Activated CD4-positive, alpha-beta memory T cell treated with anti-CD3 and anti-CD28 coated beads, Interleukin-2, amount 10 ng/mL, durations not matched to agents 7 days and 5 days (primary cell): ENCODE measurements at regions of chr11 and their contacts with region 1.

Region 1: GRCh38 chr11:65040847-65041621 is at the start of gene SAC3D1:
- DNase-seq: peak; percentile 95
- H3K4me3 Mint-ChIP-seq: peak within 1 kb of the TSS; percentile 91
- H3K27ac Mint-ChIP-seq: peak within 1 kb of the TSS; percentile 97
- H3K4me1 Mint-ChIP-seq: peaks cover 41% of the 10 kb centered on the region
- H3K27me3 Mint-ChIP-seq: no peaks in the 10 kb centered on the region
- total RNA-seq, gene SAC3D1: 24.2 to 24.8 TPM

Region 2: DNA sequence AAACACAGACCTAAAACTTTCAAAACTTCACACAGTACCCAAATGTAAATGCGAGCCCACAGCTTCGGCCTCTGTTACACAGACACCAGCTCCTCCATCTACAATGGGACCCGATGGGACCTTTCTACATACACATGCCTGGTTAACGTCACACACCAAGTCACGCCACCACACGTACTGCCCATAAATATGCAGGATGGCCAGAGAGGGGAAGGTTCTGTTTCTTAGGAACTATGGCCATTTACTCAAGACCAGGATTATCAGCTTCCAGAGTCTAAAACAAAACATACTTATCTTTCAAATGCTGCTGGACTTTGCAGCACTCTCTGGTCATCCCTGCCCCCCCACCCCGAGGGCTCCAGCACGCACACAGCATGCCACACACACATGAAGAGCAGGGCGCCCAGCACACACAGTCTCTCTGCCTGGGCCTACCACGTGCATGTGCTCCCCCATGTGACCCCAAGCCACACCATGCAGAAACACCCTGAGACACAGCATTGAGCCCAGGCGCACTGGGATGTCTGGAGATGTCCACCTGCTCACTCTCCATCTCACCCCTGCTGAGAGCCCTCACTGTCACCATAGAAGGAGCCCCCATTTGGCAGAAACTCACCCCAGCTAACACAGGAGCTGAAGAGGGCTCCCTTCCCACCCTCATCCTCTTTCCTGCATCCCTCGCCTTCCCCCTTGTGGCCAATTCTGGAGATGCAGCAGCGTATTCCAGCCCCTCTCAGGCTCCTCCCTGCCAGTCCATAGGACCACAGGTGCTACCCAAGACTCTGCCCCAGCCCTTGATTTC is 388.2 kb before region 1 on chr11:
- CTCF ChIA-PET with region 1: no interaction called
- POLR2A ChIA-PET with region 1: no interaction called
- DNase-seq: peak; percentile 72
- H3K4me3 Mint-ChIP-seq: no peak overlapping the region
- H3K27ac Mint-ChIP-seq: no peak overlapping the region
- H3K4me1 Mint-ChIP-seq: peaks cover 6% of the 10 kb centered on the region
- H3K27me3 Mint-ChIP-seq: no peaks in the 10 kb centered on the region

Region 3: GRCh38 chr11:65027213-65028067 is 13.6 kb before region 1 on chr11 and contains the start of gene SNX15:
- CTCF ChIA-PET with region 1: interaction called, 13 read pairs
- POLR2A ChIA-PET with region 1: interaction called, 51 read pairs
- DNase-seq: peak; percentile 94
- H3K4me3 Mint-ChIP-seq: peak within 1 kb of the TSS; percentile 78
- H3K27ac Mint-ChIP-seq: peak within 1 kb of the TSS; percentile 82
- H3K4me1 Mint-ChIP-seq: peaks cover 27% of the 10 kb centered on the region
- H3K27me3 Mint-ChIP-seq: no peaks in the 10 kb centered on the region
- total RNA-seq, gene SNX15: 24.3 to 24.6 TPM

Region 4: DNA sequence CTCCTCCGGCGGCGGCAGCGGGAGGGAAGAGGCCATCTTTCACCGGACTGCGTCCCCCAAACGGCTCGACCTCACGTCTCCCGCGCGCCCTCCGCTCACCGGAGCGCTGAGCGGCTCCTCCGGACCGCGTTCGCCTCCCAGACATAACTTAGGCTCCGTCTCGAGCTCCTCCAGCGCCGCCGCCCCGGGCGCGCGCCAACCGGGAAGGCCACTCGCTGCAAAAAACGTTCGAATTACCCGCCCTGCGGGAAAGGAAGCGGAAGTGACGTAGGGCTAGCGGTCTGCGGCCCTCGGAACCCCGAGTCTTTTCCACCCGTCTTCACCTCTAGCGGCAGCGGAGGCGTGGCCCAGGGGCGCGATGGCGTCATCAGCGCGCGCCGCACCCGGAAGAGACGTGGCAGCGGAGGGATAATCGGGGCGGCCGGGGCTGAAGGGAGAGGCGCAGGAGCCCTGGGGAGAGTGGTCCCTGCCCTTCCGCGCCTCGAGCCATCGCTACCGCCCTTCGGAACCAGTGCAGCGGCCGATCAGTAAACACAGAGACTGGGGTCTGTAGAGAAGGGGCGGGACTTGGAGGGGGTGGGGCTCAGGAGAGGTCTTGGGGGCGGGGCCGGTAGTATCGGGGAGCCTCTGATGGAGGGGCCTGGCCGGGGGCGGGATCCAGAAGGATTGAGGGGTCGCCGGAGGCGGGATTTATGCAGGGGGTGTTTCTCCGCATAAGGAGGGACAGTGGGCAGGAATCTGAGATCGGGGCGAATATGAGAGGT is 43.0 kb after region 1 on chr11 and contains the starts of genes CDCA5 and ZFPL1:
- CTCF ChIA-PET with region 1: interaction called, 4 read pairs
- POLR2A ChIA-PET with region 1: interaction called, 43 read pairs
- DNase-seq: peak; percentile 96
- H3K4me3 Mint-ChIP-seq: peak within 1 kb of the TSS; percentile 91
- H3K27ac Mint-ChIP-seq: peak within 1 kb of the TSS; percentile 88
- H3K4me1 Mint-ChIP-seq: peaks cover 62% of the 10 kb centered on the region
- H3K27me3 Mint-ChIP-seq: no peaks in the 10 kb centered on the region
- total RNA-seq, gene CDCA5: 98.2 to 104 TPM
- total RNA-seq, gene ZFPL1: 30.1 to 31.6 TPM

Region 5: DNA sequence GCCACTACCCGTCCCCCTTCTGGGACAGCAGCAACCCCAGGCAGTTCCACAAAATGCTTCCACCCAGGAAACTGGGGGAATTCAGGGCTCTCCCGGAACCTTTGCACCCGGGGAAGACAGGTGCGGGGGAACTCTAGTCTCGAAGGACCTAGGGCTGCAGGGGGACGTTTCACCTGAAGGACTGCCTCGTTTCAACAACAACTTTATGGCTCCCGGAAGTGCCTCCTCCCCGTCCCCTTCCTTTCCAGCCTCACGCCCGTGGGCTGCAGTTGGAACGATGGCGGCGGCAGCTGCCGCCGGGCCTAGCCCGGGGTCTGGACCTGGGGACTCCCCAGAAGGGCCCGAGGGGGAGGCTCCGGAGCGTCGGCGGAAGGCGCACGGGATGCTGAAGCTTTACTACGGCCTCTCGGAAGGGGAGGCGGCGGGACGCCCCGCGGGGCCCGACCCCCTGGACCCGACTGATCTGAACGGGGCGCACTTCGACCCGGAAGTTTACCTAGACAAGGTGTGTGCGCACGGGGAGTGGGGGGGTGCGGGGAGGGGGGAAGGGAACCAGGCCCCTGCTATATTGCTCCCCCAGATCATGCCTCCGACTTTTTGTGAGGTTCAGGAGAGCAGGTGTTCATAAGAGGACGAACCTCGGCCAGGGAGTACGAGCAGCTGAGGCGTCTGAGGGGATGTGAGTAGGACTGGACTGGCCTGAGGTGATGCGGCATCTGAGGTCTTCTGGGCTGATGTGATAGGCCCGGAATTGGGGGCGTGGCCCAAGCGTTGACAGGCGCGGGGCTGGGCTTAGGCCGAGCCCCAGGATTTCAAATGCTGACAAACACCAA is 55.2 kb after region 1 on chr11 and contains the start of gene VPS51:
- CTCF ChIA-PET with region 1: no interaction called
- POLR2A ChIA-PET with region 1: interaction called, 18 read pairs
- DNase-seq: peak; percentile 91
- H3K4me3 Mint-ChIP-seq: peak within 1 kb of the TSS; percentile 97
- H3K27ac Mint-ChIP-seq: peak within 1 kb of the TSS; percentile 96
- H3K4me1 Mint-ChIP-seq: peaks cover 25% of the 10 kb centered on the region
- H3K27me3 Mint-ChIP-seq: no peaks in the 10 kb centered on the region
- total RNA-seq, gene VPS51: 117 to 123 TPM

Region 6: GRCh38 chr11:65169164-65169641 is 128.2 kb after region 1 on chr11:
- CTCF ChIA-PET with region 1: no interaction called
- POLR2A ChIA-PET with region 1: no interaction called
- DNase-seq: no peak
- H3K4me3 Mint-ChIP-seq: no peak overlapping the region
- H3K27ac Mint-ChIP-seq: peak overlapping the region; percentile 70
- H3K4me1 Mint-ChIP-seq: peaks cover 11% of the 10 kb centered on the region
- H3K27me3 Mint-ChIP-seq: no peaks in the 10 kb centered on the region